ENCODE measurements at regions of chr6 and their contacts with region 1.

Region 1: GRCh38 chr6:87701676-87702588 is at the start of gene AKIRIN2:
- DNase-seq: peak; percentile 91 to 99 (median 97)
- ATAC-seq: peak; percentile 82
- H3K4me3 Mint-ChIP-seq: peak within 1 kb of the TSS; percentile 91 to 99 (median 94)
- H3K27ac Mint-ChIP-seq: peak within 1 kb of the TSS; percentile 72 to 99 (median 96)
- H3K4me1 Mint-ChIP-seq: peaks cover 11 to 49% (median 41%) of the 10 kb centered on the region in 4 donors
- H3K27me3 Mint-ChIP-seq: no peaks in the 10 kb centered on the region
- polyA plus RNA-seq, gene AKIRIN2: 20.2 to 33.4 (median 27.2) TPM

Region 2: GRCh38 chr6:87589693-87590549 is 112.0 kb before region 1 on chr6 and contains the starts of genes ORC3 and RARS2:
- POLR2A ChIA-PET with region 1: interaction called, 23 read pairs
- DNase-seq: peak; percentile 88 to 96 (median 91)
- ATAC-seq: peak; percentile 98 to 99
- H3K4me3 Mint-ChIP-seq: peak within 1 kb of the TSS; percentile 90 to 99 (median 94)
- H3K27ac Mint-ChIP-seq: peak within 1 kb of the TSS; percentile 89 to 100 (median 96)
- H3K4me1 Mint-ChIP-seq: peaks cover 26 to 80% (median 71%) of the 10 kb centered on the region in 4 donors
- H3K27me3 Mint-ChIP-seq: no peaks in the 10 kb centered on the region
- polyA plus RNA-seq, gene ORC3: 33.8 to 37.7 (median 36.7) TPM
- polyA plus RNA-seq, gene RARS2: 17.3 to 29.1 (median 27.1) TPM

Region 3: GRCh38 chr6:87656857-87657256 is 45.1 kb before region 1 on chr6:
- POLR2A ChIA-PET with region 1: interaction called, 10 read pairs
- DNase-seq: peak in 2 of 10 donors; percentile 13 to 41
- ATAC-seq: peak; percentile 23 to 64
- H3K4me3 Mint-ChIP-seq: peak overlapping the region in 4 of 10 donors; percentile 2 to 25 (median 12)
- H3K27ac Mint-ChIP-seq: peak overlapping the region in 7 of 10 donors; percentile 31 to 62 (median 44)
- H3K4me1 Mint-ChIP-seq: peaks cover 5 to 27% (median 18%) of the 10 kb centered on the region in 4 donors
- H3K27me3 Mint-ChIP-seq: no peaks in the 10 kb centered on the region